GM10248 (cell line): ENCODE measurements at regions of chrX and their contacts with region 1.

Region 1: GRCh38 chrX:11758400-11759171 is 549 bp downstream of the MSL3 start:
- DNase-seq: peak; percentile 82
- CTCF ChIP-seq: peak; percentile 58

Region 2: DNA sequence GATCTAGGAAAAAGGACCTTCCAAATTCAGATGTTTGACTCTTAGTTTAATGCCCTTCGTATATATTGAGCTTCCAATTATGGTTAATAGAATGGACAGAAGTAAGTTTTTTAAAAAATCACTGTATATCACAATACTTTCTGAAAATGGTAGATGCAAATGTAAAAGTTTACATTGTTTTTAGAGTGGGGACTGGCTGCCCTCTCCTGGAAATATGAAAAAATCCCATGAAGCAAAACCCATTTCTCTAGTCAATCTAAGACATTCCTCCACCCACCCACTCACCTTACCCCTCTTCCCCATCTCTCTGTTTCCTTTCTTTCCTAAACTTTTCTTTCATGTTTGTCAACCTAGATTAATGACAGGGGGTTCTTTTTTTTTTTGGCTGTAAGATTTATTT is 227.4 kb before region 1 on chrX:
- CTCF ChIA-PET with region 1: interaction called, 12 read pairs
- POLR2A ChIA-PET with region 1: no interaction called
- DNase-seq: no peak
- CTCF ChIP-seq: no peak

Region 3: DNA sequence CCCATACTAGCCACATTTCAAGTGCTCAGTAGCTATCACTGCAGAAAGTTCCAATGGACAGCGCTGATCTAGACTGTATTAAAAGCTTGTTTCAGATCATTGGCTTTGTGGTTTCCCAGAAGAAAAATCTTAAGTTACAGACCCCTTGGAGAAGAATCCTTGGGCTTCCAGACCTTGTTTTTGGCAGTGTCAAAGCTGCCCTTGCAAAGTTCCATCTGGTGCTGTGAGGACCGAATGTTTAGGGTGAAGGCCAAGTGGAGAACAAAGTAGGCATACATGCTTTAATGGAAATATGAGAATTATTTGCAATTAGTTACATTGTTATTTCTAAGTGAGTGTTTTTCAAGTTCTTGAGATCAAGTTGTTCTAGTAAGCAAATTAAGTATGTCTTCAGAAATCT is 524.4 kb after region 1 on chrX:
- CTCF ChIA-PET with region 1: no interaction called
- POLR2A ChIA-PET with region 1: no interaction called
- DNase-seq: no peak
- CTCF ChIP-seq: no peak